ENCODE measurements at regions of chr12 and their contacts with region 1.

Region 1: DNA sequence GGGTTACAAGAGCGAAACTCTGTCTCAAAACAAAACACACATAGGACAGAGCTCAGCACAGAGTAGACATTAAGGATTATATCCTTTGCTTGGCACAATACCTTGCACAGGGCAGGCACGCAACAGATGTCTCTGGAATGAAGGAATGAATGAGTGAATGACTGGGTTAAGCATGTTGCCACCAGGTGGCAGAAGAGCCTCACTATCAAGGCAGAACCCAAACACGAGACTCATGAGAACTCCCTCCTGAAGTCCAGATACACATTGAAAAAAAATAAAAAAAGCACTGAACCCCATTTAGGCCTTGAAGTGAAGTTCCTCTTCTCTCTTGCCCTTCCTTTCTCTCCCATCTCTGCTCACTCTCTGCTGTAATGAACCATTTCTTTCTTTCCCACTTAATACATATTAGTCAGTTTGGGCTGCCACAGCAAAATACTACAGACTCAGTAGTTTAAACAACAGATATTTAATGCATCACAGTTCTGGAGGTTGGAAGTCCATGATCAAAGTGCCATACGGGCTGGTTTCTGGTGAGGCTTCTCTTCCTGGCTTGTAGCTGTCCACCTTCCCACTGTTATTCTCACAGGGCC is 26.6 kb upstream of the LTA4H start:
- DNase-seq: peak; percentile 37 to 80
- ATAC-seq: peak; percentile 75 to 89 (median 84)
- H3K4me3 ChIP-seq: no peak overlapping the region
- H3K27ac ChIP-seq: peak overlapping the region in 1 of 10 donors; percentile 36
- H3K4me1 ChIP-seq: peaks cover 0 to 32% (median 17%) of the 10 kb centered on the region in 9 donors
- H3K27me3 ChIP-seq: no peaks in the 10 kb centered on the region
- CTCF ChIP-seq: peak; percentile 79 to 91 (median 87)

Region 2: DNA sequence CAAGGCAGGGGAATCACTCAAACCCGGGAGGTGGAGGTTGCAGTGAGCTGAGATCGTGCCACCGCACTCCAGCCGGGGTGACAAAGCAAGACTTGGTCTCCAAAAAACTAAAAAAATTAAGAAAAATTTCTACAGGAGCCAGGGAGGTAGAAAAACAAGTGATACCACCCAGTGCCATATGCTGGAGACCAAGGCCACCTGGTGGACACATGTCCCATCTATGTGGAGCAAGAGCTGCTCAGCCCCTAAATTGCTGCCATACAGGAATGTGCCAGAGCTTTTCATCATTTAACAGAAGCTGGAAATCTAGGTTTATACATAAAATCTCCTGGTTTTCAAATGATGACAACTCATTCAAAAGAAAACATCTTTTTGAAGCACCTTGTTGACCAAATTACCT is 70.9 kb after region 1 on chr12:
- intact Hi-C with region 1: loop called in 3 of 10 experiments (anchors 2 to 10 kb)
- DNase-seq: peak in 1 of 2 donors; percentile 21
- ATAC-seq: no peak
- H3K4me3 ChIP-seq: no peak overlapping the region
- H3K27ac ChIP-seq: no peak overlapping the region
- H3K4me1 ChIP-seq: peaks cover 0 to 27% (median 3%) of the 10 kb centered on the region in 9 donors
- H3K27me3 ChIP-seq: peaks cover 0 to 6% (median 0%) of the 10 kb centered on the region in 7 donors
- CTCF ChIP-seq: peak in 6 of 9 donors; percentile 32 to 56 (median 36)

Region 3: GRCh38 chr12:96219698-96220206 is 157.8 kb after region 1 on chr12:
- intact Hi-C with region 1: loop called in 8 of 10 experiments (anchors 1 to 5 kb)
- DNase-seq: no peak
- ATAC-seq: peak in 4 of 8 donors; percentile 10 to 57 (median 23)
- H3K4me3 ChIP-seq: no peak overlapping the region
- H3K27ac ChIP-seq: peak overlapping the region in 4 of 10 donors; percentile 8 to 60 (median 30)
- H3K4me1 ChIP-seq: peaks cover 0 to 95% (median 68%) of the 10 kb centered on the region in 9 donors
- H3K27me3 ChIP-seq: no peaks in the 10 kb centered on the region
- CTCF ChIP-seq: no peak

Measured in heart right ventricle (tissue), 16 donors.